H1 (cell line): ENCODE measurements at regions of chr14 and their contacts with region 1.

Region 1: GRCh38 chr14:22252686-22253085 is 336.3 kb downstream of the DAD1 start:
- DNase-seq: no peak
- H3K4me3 ChIP-seq: no peak overlapping the region
- H3K27ac ChIP-seq: no peak overlapping the region
- H3K4me1 ChIP-seq: peaks cover 0 to 2% (median 0%) of the 10 kb centered on the region in 4 experiments; a peak in 3 of 7 replicates
- H3K27me3 ChIP-seq: no peaks in the 10 kb centered on the region
- CTCF ChIP-seq: no peak
- EP300 ChIP-seq: no peak
- POLR2A ChIP-seq: no peak
- RAD21 ChIP-seq: no peak

Region 2: DNA sequence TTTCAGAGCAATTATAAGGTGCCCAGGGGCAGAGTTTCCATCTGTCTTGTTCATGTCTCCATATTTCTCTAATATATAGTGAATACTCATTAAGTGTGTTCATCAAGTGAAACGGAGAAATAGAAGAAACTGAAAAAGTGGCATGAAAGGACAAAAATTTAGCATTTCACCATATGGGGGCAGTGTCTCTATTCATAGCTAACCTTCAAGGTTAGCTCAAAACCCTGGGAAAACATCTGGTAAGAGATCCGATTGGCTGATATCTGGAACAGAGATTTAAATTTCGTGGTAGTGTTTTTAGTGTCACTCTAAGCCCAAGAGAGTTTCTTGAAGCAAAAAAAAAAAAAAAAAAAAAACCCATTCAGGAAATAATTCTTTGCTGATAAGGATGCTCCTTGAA is 31.2 kb before region 1 on chr14:
- CTCF ChIA-PET with region 1: interaction called, 13 read pairs
- POLR2A ChIA-PET with region 1: no interaction called
- DNase-seq: no peak
- H3K4me3 ChIP-seq: no peak overlapping the region
- H3K27ac ChIP-seq: no peak overlapping the region
- H3K4me1 ChIP-seq: no peaks in the 10 kb centered on the region
- H3K27me3 ChIP-seq: no peaks in the 10 kb centered on the region
- CTCF ChIP-seq: peak in 1 of 3 experiments; percentile 38; a peak in 2 of 4 replicates
- EP300 ChIP-seq: no peak
- POLR2A ChIP-seq: no peak
- RAD21 ChIP-seq: peak in 1 of 2 experiments; percentile 14; a peak in 1 of 4 replicates

Region 3: DNA sequence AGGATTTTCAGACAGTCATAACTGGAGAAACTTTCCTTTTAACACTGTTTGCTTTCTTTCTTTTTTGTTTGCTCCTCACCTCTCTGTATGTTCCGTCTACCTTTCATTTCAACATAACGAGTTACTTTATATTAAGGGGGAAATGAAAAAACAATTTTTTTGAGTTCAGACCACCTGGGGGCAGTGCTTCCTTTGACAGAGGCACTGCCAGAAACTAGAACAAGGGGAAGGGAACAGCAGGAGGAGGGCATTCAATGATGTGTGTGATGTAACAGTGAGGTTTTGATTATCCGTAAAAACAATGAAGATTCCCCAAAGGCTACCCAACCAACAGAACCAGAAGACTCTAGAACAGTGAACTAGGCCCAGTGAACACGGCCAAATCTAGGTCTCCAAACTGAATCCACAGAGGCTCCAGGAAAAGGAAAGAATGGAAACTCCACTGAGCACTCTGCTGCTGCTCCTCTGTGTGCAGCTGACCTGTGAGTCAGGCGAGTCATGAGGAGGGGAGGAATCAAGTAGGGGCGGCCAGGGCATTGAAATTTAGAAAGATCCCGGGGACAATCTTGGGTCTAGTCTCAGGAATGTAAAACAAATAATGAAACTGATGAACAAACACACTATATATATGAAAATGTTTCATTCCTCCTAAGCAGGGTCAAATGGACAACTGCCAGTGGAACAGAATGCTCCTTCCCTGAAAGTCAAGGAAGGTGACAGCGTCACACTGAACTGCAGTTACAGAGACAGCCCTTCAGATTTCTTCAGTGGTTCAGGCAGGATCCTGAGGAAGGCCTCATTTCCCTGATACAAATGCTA is 12.8 kb after region 1 on chr14:
- CTCF ChIA-PET with region 1: interaction called, 10 read pairs
- POLR2A ChIA-PET with region 1: no interaction called
- DNase-seq: no peak
- H3K4me3 ChIP-seq: no peak overlapping the region
- H3K27ac ChIP-seq: no peak overlapping the region
- H3K4me1 ChIP-seq: peaks cover 0 to 4% (median under 1%) of the 10 kb centered on the region in 4 experiments; a peak in 2 of 7 replicates
- H3K27me3 ChIP-seq: no peaks in the 10 kb centered on the region
- CTCF ChIP-seq: peak in 1 of 3 experiments; percentile 31; a peak in 2 of 4 replicates
- EP300 ChIP-seq: no peak
- POLR2A ChIP-seq: no peak
- RAD21 ChIP-seq: peak; percentile 31 to 41

Region 4: GRCh38 chr14:22276913-22277816 is 24.5 kb after region 1 on chr14:
- CTCF ChIA-PET with region 1: interaction called, 10 read pairs
- POLR2A ChIA-PET with region 1: no interaction called
- DNase-seq: no peak
- H3K4me3 ChIP-seq: no peak overlapping the region
- H3K27ac ChIP-seq: no peak overlapping the region
- H3K4me1 ChIP-seq: no peaks in the 10 kb centered on the region; a peak in 1 of 7 replicates
- H3K27me3 ChIP-seq: no peaks in the 10 kb centered on the region
- CTCF ChIP-seq: peak in 1 of 3 experiments; percentile 47; a peak in 2 of 4 replicates
- EP300 ChIP-seq: no peak
- POLR2A ChIP-seq: no peak
- RAD21 ChIP-seq: peak; percentile 11 to 22; a peak in 2 of 4 replicates